PC-9 (cell line): ENCODE measurements at regions of chr11 and their contacts with region 1.

Region 1: DNA sequence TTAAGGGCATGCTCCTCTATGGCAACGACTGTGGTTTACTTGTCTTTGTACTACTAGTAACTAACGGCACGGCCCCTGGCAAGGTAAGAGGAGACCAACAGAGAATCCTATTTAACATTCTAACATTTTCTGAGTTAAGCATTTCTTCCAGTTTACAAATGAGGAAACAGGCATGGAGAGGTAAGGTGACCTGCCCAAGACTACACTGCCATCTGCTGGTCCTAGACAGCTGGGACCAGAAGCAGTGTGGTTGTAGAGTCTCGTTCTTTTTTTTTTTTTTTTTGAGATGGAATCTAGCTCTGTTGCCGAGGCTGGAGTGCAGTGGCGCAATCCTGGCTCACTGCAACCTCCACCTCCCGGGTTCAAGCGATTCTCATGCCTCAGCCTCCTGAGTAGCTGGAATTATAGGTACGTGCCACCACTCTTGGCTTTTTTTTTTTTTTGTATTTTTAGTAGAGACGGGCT is 5.3 kb upstream of the RAPSN start:
- DNase-seq: peak; percentile 67 to 72
- H3K4me3 ChIP-seq: no peak overlapping the region
- H3K27ac ChIP-seq: no peak overlapping the region
- H3K4me1 ChIP-seq: no peaks in the 10 kb centered on the region
- H3K27me3 ChIP-seq: no peaks in the 10 kb centered on the region
- CTCF ChIP-seq: peak; percentile 79

Region 2: GRCh38 chr11:45834298-45834756 is 1619.9 kb before region 1 on chr11:
- CTCF ChIA-PET with region 1: no interaction called
- POLR2A ChIA-PET with region 1: interaction called, 60 read pairs
- intact Hi-C with region 1: no loop called
- DNase-seq: no peak
- H3K4me3 ChIP-seq: no peak overlapping the region
- H3K27ac ChIP-seq: no peak overlapping the region
- H3K4me1 ChIP-seq: no peaks in the 10 kb centered on the region
- H3K27me3 ChIP-seq: peaks cover 14% of the 10 kb centered on the region
- CTCF ChIP-seq: no peak

Region 3: DNA sequence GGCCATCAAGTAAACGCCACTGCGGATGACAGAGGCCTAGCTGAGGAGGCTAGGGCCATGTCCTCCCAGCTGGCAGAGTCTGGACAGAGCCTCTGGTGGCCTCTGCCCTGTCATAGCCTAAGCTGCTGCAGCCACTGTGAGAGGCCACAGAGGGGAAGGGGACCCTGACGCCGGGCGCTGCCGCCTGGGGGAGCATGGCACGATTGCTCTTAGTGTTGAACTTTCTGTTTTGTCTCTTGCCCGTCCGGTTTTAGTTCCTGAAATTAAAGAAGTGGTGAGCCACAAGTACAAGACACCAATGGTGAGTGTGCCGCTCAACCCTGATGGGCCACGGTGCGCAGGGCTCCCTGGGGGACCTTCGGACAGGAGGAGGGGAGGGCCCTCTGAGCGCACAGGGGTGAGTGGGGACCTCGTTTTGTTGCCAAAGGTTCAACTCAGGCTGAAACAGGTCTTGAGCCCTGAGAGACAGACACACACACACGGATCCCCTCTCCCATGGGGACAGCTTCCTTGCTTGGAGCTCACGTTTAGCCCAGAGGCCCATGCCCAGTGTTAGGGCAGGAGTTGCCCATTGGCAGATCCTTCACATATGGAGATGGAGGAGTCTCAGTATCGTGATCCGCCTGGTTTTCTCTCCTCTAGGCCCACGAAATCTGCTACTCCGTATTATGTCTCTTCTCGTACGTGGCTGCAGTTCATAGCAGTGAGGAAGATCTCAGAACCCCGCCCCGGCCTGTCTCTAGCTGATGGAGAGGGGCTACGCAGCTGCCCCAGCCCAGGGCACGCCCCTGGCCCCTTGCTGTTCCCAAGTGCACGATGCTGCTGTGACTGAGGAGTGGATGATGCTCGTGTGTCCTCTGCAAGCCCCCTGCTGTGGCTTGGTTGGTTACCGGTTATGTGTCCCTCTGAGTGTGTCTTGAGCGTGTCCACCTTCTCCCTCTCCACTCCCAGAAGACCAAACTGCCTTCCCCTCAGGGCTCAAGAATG is 125.5 kb before region 1 on chr11:
- CTCF ChIA-PET with region 1: interaction called, 12 read pairs
- POLR2A ChIA-PET with region 1: no interaction called
- intact Hi-C with region 1: no loop called
- DNase-seq: no peak
- H3K4me3 ChIP-seq: no peak overlapping the region
- H3K27ac ChIP-seq: no peak overlapping the region
- H3K4me1 ChIP-seq: no peaks in the 10 kb centered on the region
- H3K27me3 ChIP-seq: no peaks in the 10 kb centered on the region
- CTCF ChIP-seq: no peak

Region 4: DNA sequence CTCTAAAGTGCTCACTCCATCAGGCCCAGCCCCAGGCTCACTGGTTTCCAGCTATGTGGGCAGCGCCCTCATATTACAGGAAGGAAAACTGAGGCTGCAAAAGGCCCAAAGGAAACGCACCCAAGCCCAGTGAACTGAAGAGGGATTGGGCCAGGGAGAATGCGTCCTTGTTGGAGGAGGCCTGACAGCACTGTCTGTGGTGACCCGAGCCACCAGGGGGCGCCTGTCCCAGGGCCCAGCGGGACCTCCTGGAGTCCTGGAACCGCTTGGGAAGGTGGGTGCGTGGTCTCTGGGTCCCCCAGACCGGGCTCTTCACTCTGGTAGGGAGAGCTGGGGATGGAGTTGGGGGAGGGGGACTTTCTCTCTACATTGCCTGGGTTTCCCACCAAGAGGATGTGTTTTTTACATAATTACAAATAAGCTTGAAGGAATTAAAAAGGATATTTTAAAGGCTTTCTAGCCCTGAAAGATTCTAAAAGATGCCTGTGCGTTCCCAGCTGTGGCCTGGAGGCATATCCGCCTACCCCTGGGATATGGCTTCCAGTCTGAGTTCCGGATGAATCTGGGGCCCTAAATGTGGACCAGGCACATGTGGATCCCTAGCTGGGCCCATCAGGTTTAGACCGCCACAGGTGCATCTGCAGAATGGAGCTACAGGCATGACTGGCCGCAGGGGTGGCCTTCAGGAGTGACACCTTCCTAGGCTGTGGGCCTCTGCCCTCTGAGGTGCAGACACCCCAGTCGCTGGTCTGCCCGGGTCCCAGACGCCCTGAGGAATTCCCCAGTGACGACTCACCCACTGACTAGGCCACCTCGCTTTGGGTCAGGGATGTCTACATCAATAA is 80.1 kb before region 1 on chr11:
- CTCF ChIA-PET with region 1: interaction called, 6 read pairs
- POLR2A ChIA-PET with region 1: no interaction called
- intact Hi-C with region 1: loop called (anchors 1 kb)
- DNase-seq: peak in 1 of 2 experiments; percentile 76
- H3K4me3 ChIP-seq: no peak overlapping the region
- H3K27ac ChIP-seq: no peak overlapping the region
- H3K4me1 ChIP-seq: no peaks in the 10 kb centered on the region
- H3K27me3 ChIP-seq: no peaks in the 10 kb centered on the region
- CTCF ChIP-seq: peak; percentile 98

Region 5: GRCh38 chr11:47616726-47617416 is 162.7 kb after region 1 on chr11:
- CTCF ChIA-PET with region 1: no interaction called
- POLR2A ChIA-PET with region 1: no interaction called
- intact Hi-C with region 1: loop called (anchors 5 kb)
- DNase-seq: peak in 1 of 2 experiments; percentile 32
- H3K4me3 ChIP-seq: no peak overlapping the region
- H3K27ac ChIP-seq: no peak overlapping the region
- H3K4me1 ChIP-seq: no peaks in the 10 kb centered on the region
- H3K27me3 ChIP-seq: no peaks in the 10 kb centered on the region
- CTCF ChIP-seq: peak; percentile 69

Region 6: GRCh38 chr11:48172818-48173609 is 718.8 kb after region 1 on chr11:
- CTCF ChIA-PET with region 1: interaction called, 14 read pairs
- POLR2A ChIA-PET with region 1: no interaction called
- intact Hi-C with region 1: no loop called
- DNase-seq: peak; percentile 55 to 58
- H3K4me3 ChIP-seq: no peak overlapping the region
- H3K27ac ChIP-seq: no peak overlapping the region
- H3K4me1 ChIP-seq: no peaks in the 10 kb centered on the region
- H3K27me3 ChIP-seq: no peaks in the 10 kb centered on the region
- CTCF ChIP-seq: peak; percentile 98